Activated naive CD4-positive, alpha-beta T cell treated with anti-CD3 and anti-CD28 coated beads for 36 hours (primary cell): ENCODE measurements at regions of chr13 and their contacts with region 1.

Region 1: GRCh38 chr13:59391696-59392095 is 772.0 kb downstream of the DIAPH3 start:
- DNase-seq: peak; percentile 72
- H3K4me3 Mint-ChIP-seq: no peak overlapping the region
- H3K27ac Mint-ChIP-seq: no peak overlapping the region
- H3K4me1 Mint-ChIP-seq: no peaks in the 10 kb centered on the region
- H3K27me3 Mint-ChIP-seq: no peaks in the 10 kb centered on the region

Region 2: GRCh38 chr13:59906413-59907049 is 514.8 kb after region 1 on chr13:
- CTCF ChIA-PET with region 1: no interaction called
- intact Hi-C with region 1: loop called (anchors 10 kb)
- DNase-seq: no peak
- H3K4me3 Mint-ChIP-seq: no peak overlapping the region
- H3K27ac Mint-ChIP-seq: no peak overlapping the region
- H3K4me1 Mint-ChIP-seq: no peaks in the 10 kb centered on the region
- H3K27me3 Mint-ChIP-seq: peaks cover 2% of the 10 kb centered on the region

Region 3: GRCh38 chr13:60163478-60164233 is 772.0 kb after region 1 on chr13 and contains the start of gene DIAPH3:
- CTCF ChIA-PET with region 1: interaction called, 4 read pairs
- intact Hi-C with region 1: loop called (anchors 1 kb)
- DNase-seq: peak; percentile 97
- H3K4me3 Mint-ChIP-seq: peak within 1 kb of the TSS; percentile 91
- H3K27ac Mint-ChIP-seq: peak within 1 kb of the TSS; percentile 88
- H3K4me1 Mint-ChIP-seq: peaks cover 36% of the 10 kb centered on the region
- H3K27me3 Mint-ChIP-seq: no peaks in the 10 kb centered on the region
- total RNA-seq, gene DIAPH3: 24.0 to 24.3 TPM

Region 4: GRCh38 chr13:60329221-60329983 is 937.7 kb after region 1 on chr13:
- CTCF ChIA-PET with region 1: interaction called, 4 read pairs
- intact Hi-C with region 1: loop called (anchors 1 kb)
- DNase-seq: peak; percentile 51
- H3K4me3 Mint-ChIP-seq: no peak overlapping the region
- H3K27ac Mint-ChIP-seq: no peak overlapping the region
- H3K4me1 Mint-ChIP-seq: no peaks in the 10 kb centered on the region
- H3K27me3 Mint-ChIP-seq: no peaks in the 10 kb centered on the region

Region 5: GRCh38 chr13:60431108-60431700 is 1039.5 kb after region 1 on chr13:
- CTCF ChIA-PET with region 1: interaction called, 8 read pairs
- intact Hi-C with region 1: loop called (anchors 1 kb)
- DNase-seq: no peak
- H3K4me3 Mint-ChIP-seq: no peak overlapping the region
- H3K27ac Mint-ChIP-seq: no peak overlapping the region
- H3K4me1 Mint-ChIP-seq: peaks cover 20% of the 10 kb centered on the region
- H3K27me3 Mint-ChIP-seq: no peaks in the 10 kb centered on the region